ENCODE measurements at regions of chr1 and their contacts with region 1.

Region 1: GRCh38 chr1:172745014-172745413 is 86.1 kb downstream of the FASLG start:
- H3K4me3 ChIP-seq: no peak overlapping the region
- H3K27ac ChIP-seq: no peak overlapping the region
- H3K4me1 ChIP-seq: no peaks in the 10 kb centered on the region
- CTCF ChIP-seq: peak; percentile 85

Region 2: GRCh38 chr1:172686143-172686542 is 58.9 kb before region 1 on chr1:
- CTCF ChIA-PET with region 1: no interaction called
- POLR2A ChIA-PET with region 1: no interaction called
- H3K4me3 ChIP-seq: no peak overlapping the region
- H3K27ac ChIP-seq: no peak overlapping the region
- H3K4me1 ChIP-seq: no peaks in the 10 kb centered on the region
- CTCF ChIP-seq: no peak

Region 3: DNA sequence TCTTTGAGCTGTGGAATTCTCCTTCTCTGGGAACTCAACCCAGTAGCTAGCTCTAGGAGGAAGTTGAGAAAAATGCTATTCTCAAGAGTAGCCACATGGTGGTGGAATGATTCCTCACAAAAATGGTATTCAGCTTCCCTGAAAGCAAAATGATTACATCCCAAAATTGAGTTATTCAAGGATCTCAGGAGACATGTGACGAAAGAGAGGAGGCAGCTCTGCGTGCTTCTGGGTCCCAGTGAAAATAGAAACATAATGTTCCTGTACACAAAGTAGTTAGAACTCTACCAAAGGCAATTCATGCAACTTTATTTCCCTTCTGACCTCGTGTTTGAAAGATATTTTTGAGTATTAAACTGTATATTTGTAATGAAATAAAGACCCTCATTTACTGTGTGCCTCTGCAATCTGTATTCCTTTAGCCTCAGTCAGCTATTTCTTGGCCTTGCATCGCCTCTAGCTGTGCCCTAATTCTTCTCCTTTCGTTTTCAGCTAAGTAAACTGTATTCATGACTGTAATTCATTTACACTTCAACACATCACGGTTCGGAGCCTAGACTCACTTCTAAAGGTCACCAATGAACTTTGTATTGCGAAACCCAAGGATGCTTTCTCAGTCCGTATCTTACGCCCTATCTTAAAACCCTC is 81.2 kb after region 1 on chr1:
- CTCF ChIA-PET with region 1: interaction called, 30 read pairs
- POLR2A ChIA-PET with region 1: no interaction called
- H3K4me3 ChIP-seq: no peak overlapping the region
- H3K27ac ChIP-seq: no peak overlapping the region
- H3K4me1 ChIP-seq: no peaks in the 10 kb centered on the region
- CTCF ChIP-seq: peak; percentile 35

Measured in HEK293 (cell line).